Sciatic nerve (tissue), 2 donors: ENCODE measurements at regions of chr3 and their contacts with region 1.

Region 1: GRCh38 chr3:136752422-136753325 is 496 bp upstream of the STAG1 start:
- DNase-seq: peak; percentile 100
- ATAC-seq: peak; percentile 96

Region 2: GRCh38 chr3:136075218-136075808 is 677.4 kb before region 1 on chr3:
- intact Hi-C with region 1: loop called (anchors 5 kb)
- DNase-seq: peak; percentile 83
- ATAC-seq: peak; percentile 79

Region 3: DNA sequence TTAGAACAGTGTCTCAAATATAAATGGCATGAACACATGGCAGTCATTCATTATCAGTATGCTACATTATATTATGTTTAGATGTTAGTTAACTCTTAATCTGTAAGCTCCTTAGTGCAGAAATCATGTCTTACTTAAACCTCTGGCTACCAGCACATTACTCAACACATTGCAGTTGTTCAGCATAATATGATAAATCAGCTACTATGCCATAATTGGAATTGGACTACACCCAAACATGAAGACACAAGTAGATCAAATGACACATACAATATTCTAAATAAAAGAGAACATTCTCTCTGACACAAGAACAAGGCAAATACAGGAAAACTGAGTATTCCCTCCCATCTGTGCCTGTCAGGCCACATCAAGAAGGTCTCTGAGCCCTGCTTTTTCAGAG is 386.4 kb before region 1 on chr3:
- intact Hi-C with region 1: loop called (anchors 5 kb)
- DNase-seq: no peak
- ATAC-seq: no peak

Region 4: GRCh38 chr3:136404056-136404455 is 348.6 kb before region 1 on chr3:
- intact Hi-C with region 1: no loop called
- DNase-seq: no peak
- ATAC-seq: no peak

Region 5: DNA sequence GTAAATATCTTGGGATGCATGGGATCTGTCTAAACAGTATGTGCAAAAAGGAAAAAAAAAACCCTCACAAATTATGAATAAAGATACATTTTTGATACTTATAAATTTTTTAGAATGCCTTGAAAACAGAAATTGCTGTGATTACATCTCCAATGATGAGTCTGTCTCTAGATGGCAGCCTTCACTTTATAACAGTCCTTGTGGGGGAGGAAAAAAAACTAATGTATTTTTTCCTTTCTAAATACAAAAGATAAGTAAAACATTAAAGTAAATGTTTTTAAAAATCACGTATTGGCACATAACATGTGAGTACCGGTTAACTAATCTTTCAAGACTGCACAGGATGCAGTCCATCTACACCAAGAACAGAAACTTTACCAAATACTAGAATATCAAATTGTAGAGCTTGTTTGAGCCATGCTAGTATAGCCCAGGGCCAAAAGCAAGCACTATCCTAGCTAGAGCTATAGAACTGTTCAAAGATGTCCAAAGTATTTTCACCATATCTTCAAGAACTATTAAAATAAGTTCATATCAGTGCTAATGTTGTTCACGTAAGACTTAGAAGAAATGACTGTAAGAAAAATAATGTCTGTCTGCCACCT is 206.9 kb before region 1 on chr3:
- intact Hi-C with region 1: loop called (anchors 10 kb)
- DNase-seq: no peak
- ATAC-seq: no peak

Region 6: GRCh38 chr3:136734382-136735070 is 18.1 kb before region 1 on chr3:
- intact Hi-C with region 1: no loop called
- DNase-seq: no peak
- ATAC-seq: no peak

Region 7: GRCh38 chr3:136792556-136793330 is 40.1 kb after region 1 on chr3:
- intact Hi-C with region 1: loop called (anchors 5 kb)
- DNase-seq: no peak
- ATAC-seq: no peak

Region 8: DNA sequence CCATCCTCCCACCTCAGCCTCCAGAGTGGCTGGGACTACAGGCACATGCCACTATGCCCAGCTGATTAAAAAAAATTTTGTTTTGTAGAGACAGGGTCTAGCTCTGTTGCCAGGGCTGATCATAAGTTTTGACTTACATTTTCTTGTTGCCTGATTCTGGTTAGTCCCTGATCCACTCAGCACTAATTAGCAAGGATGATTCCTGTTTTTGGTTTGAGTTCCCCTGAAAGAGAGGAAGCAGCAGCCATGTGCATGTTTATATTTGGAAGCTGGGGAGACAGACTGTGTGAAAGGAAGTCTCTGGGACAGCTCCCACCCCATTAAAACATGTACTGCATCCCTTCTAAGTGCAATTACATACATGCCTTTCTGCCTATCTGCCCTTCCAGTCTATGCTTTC is 105.7 kb after region 1 on chr3:
- intact Hi-C with region 1: loop called (anchors 10 kb)
- DNase-seq: no peak
- ATAC-seq: no peak

Region 9: GRCh38 chr3:137013955-137014688 is 261.4 kb after region 1 on chr3:
- intact Hi-C with region 1: loop called (anchors 10 kb)
- DNase-seq: peak; percentile 96
- ATAC-seq: peak; percentile 97